OCI-LY7 (cell line): ENCODE measurements at regions of chr19 and their contacts with region 1.

Region 1: DNA sequence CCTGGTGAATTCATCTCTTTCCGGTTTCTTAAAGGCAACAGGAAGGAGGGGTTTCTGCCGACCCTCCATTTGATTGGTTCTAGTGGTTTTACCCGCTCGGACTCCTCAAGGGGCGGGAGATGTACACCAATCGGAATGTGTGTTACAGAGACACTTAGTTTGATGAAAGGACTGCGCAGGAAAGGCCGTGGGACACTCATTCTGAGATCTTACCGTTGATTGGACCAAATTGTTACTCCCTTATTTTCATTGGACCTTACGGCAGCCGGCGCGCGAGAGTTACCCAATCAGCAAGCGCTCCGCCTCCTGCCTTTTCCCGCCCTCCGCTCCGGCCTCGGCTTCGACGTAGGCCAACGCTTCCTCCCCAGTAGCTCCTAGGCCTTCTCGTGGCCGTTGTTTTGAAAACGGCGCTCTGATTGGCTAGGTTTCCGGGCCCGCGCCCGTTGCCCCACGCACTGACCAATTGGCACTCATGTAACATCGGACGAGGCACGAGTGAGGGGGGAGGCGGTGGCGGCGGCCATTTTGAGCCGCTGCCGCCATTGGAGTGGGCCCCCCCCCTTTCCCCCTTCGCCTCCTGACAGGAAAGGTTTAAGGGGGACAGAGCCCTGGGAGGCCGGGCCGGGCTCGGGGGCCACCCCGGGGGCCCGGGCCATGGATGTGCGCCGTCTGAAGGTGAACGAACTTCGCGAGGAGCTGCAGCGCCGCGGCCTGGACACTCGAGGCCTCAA is at the start of gene HNRNPUL1:
- DNase-seq: peak; percentile 100
- H3K4me3 ChIP-seq: peak within 1 kb of the TSS; percentile 96
- H3K27ac ChIP-seq: peak within 1 kb of the TSS; percentile 91
- H3K4me1 ChIP-seq: peaks cover 15% of the 10 kb centered on the region
- CTCF ChIP-seq: peak; percentile 64
- total RNA-seq, gene HNRNPUL1: 194 and 200 TPM in 2 replicates

Region 2: DNA sequence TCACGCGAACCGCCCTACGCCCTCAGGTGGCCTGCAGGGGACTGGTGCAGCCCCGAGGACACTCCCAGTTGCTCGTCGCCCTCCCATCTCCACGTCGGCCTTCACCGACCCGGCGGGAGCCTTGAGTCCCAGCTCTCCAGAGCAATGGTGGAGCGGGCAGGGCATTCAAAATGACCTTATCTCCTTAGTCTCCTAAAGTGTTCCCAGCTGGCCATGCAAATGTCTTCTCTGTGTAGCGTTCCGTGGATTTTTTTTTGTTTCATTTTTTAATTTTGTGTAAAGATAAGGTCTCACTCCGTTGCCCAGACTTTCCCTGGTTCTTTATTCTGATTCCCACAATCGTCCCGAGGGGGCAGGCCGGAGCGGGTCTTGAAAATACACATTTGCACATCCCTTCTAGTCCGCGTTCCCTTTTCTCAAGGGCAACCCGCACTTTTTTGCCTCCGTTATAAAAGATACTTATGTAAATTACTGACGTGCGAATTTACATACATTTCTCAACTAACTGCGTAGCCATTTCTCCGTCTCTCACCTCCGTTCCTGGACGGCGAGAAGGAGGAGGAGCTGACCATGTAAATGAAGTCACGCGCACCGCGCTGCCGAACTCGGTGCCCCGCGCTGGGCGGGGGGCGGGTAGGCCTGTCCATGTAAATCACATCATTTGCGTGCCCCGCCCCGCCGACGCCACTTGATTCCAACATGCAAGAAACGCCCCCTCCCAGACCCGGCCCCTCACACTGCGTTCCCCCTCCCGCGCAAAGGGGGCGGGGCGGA is 465.6 kb before region 1 on chr19:
- CTCF ChIA-PET with region 1: no interaction called
- POLR2A ChIA-PET with region 1: no interaction called
- intact Hi-C with region 1: loop called (anchors 5 kb)
- DNase-seq: peak; percentile 100
- H3K4me3 ChIP-seq: peak overlapping the region; percentile 62
- H3K27ac ChIP-seq: peak overlapping the region; percentile 57
- H3K4me1 ChIP-seq: peaks cover 53% of the 10 kb centered on the region
- CTCF ChIP-seq: peak; percentile 63

Region 3: GRCh38 chr19:41206926-41207750 is 56.9 kb before region 1 on chr19:
- CTCF ChIA-PET with region 1: no interaction called
- POLR2A ChIA-PET with region 1: no interaction called
- intact Hi-C with region 1: loop called (anchors 1 kb)
- DNase-seq: no peak
- H3K4me3 ChIP-seq: no peak overlapping the region
- H3K27ac ChIP-seq: no peak overlapping the region
- H3K4me1 ChIP-seq: no peaks in the 10 kb centered on the region
- CTCF ChIP-seq: no peak

Region 4: DNA sequence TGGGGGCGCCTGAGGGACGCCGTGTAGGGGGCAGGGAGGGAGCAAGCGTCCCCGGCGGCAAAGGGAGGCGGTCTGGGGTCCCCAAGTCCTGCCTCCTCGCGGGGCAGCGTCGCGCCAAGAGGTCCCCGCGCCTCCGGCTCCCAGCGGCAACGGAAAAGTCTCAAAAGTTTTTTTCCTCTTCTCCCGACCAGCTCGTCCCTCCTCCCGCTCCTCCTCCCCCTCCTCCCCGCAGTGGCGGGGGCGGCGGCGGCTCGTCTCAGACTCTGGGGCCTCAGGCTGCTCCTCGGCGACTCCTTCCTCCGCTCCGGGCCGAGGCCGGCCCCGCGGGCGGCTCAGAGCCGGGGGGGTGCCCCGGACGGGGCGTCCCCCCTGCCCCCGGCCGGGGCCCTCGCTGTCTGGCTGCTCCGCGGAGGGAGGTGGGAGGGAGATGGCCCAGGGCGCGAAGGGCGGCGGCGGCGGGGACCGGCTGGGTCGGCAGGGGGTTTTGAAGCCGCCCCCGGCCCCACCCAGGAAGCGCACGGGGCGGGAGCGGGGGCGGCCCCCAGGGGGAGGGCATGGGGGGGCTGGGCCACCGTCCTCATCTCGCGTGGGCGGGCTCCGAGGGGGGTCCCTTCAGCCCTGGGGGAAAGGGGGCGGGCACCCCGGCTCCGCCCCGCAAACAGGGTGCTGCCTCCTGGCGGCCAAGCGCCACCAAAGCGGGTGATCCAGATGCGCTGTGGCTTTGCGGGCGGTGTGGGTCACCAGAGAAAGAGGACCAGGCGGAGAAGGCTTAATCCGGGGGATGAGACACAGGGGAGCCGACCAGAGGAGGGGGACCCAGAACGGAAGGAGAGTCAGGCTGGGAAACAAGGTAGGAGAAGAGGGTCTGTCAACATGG is 89.7 kb after region 1 on chr19 and contains the start of gene TGFB1:
- CTCF ChIA-PET with region 1: no interaction called
- POLR2A ChIA-PET with region 1: interaction called, 4 read pairs
- intact Hi-C with region 1: loop called (anchors 2 kb)
- DNase-seq: peak; percentile 93
- H3K4me3 ChIP-seq: peak within 1 kb of the TSS; percentile 77
- H3K27ac ChIP-seq: peak within 1 kb of the TSS; percentile 54
- H3K4me1 ChIP-seq: peaks cover 21% of the 10 kb centered on the region
- CTCF ChIP-seq: peak; percentile 85
- total RNA-seq, gene TGFB1: 10.9 and 15.5 TPM in 2 replicates

Region 5: GRCh38 chr19:41993612-41994483 is 729.8 kb after region 1 on chr19 and contains the start of gene ATP1A3:
- CTCF ChIA-PET with region 1: interaction called, 15 read pairs
- POLR2A ChIA-PET with region 1: no interaction called
- intact Hi-C with region 1: no loop called
- DNase-seq: peak; percentile 87
- H3K4me3 ChIP-seq: peak within 1 kb of the TSS; percentile 95
- H3K27ac ChIP-seq: peak within 1 kb of the TSS; percentile 15
- H3K4me1 ChIP-seq: peaks cover 38% of the 10 kb centered on the region
- CTCF ChIP-seq: no peak
- total RNA-seq, gene ATP1A3: 3.1 and 9.3 TPM in 2 replicates